Right cardiac atrium (tissue), 5 donors: ENCODE measurements at regions of chr14 and their contacts with region 1.

Region 1: DNA sequence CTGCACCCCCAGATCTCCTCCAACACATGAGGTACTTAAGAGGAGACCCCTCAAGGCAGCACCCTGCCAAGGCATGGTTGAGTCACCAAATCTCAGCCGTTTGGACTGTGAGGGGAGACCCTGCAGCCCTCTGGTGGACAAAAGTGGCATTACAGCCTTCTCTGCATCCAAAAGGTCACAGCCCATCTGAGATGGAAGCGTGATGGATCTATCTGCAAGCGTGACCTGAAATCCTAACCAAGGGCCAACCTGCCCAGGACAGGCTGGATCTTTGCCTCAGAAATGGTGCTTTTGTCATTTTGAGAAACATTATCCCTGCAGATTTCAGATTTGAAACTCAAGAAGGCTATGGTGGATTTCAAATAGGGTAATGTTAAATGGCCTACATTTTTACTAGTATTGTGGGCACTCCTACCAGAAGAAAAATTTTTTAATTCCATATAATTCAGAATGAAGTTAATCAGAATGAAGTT is 23.7 kb upstream of the DHRS4 start:
- DNase-seq: peak; percentile 83 to 90 (median 85)
- ATAC-seq: peak; percentile 81 to 88
- H3K4me3 ChIP-seq: no peak overlapping the region
- H3K27ac ChIP-seq: no peak overlapping the region
- H3K4me1 ChIP-seq: no peaks in the 10 kb centered on the region
- H3K27me3 ChIP-seq: no peaks in the 10 kb centered on the region

Region 2: GRCh38 chr14:23631702-23632460 is 298.0 kb before region 1 on chr14:
- intact Hi-C with region 1: loop called (anchors 2 to 10 kb)
- DNase-seq: peak; percentile 68 to 83 (median 79)
- ATAC-seq: peak; percentile 92
- H3K4me3 ChIP-seq: no peak overlapping the region
- H3K27ac ChIP-seq: peak overlapping the region; percentile 10
- H3K4me1 ChIP-seq: peaks cover 2% of the 10 kb centered on the region
- H3K27me3 ChIP-seq: no peaks in the 10 kb centered on the region